ENCODE measurements at regions of chr19 and their contacts with region 1.

Region 1: GRCh38 chr19:32174386-32175113 is 170.9 kb upstream of the ZNF507 start:
- DNase-seq: no peak

Region 2: GRCh38 chr19:32104153-32104849 is 70.2 kb before region 1 on chr19:
- CTCF ChIA-PET with region 1: interaction called, 10 read pairs
- POLR2A ChIA-PET with region 1: no interaction called
- DNase-seq: peak; percentile 52